Activated naive CD4-positive, alpha-beta T cell treated with anti-CD3 and anti-CD28 coated beads for 36 hours (primary cell): ENCODE measurements at regions of chr6 and their contacts with region 1.

Region 1: GRCh38 chr6:83490217-83490807 is 22.0 kb upstream of the PRSS35 start:
- DNase-seq: no peak
- H3K4me3 Mint-ChIP-seq: no peak overlapping the region
- H3K27ac Mint-ChIP-seq: no peak overlapping the region
- H3K4me1 Mint-ChIP-seq: no peaks in the 10 kb centered on the region
- H3K27me3 Mint-ChIP-seq: no peaks in the 10 kb centered on the region

Region 2: GRCh38 chr6:83904395-83904794 is 414.1 kb after region 1 on chr6:
- CTCF ChIA-PET with region 1: no interaction called
- intact Hi-C with region 1: loop called (anchors 5 kb)
- DNase-seq: no peak
- H3K4me3 Mint-ChIP-seq: no peak overlapping the region
- H3K27ac Mint-ChIP-seq: no peak overlapping the region
- H3K4me1 Mint-ChIP-seq: peaks cover 23% of the 10 kb centered on the region
- H3K27me3 Mint-ChIP-seq: no peaks in the 10 kb centered on the region